Dendritic cell treated with granulocyte-macrophage colony-stimulating factor and Interleukin-4, amounts not matched to agents 40 ng/mL and 50 ng/mL, for 4 days (primary cell): ENCODE measurements at regions of chr11 and their contacts with region 1.

Region 1: GRCh38 chr11:2428322-2428795 is 16.0 kb downstream of the TRPM5 start:
- H3K4me3 Mint-ChIP-seq: no peak overlapping the region
- H3K27ac Mint-ChIP-seq: no peak overlapping the region
- H3K4me1 Mint-ChIP-seq: no peaks in the 10 kb centered on the region
- H3K27me3 Mint-ChIP-seq: peaks cover 25% of the 10 kb centered on the region

Region 2: DNA sequence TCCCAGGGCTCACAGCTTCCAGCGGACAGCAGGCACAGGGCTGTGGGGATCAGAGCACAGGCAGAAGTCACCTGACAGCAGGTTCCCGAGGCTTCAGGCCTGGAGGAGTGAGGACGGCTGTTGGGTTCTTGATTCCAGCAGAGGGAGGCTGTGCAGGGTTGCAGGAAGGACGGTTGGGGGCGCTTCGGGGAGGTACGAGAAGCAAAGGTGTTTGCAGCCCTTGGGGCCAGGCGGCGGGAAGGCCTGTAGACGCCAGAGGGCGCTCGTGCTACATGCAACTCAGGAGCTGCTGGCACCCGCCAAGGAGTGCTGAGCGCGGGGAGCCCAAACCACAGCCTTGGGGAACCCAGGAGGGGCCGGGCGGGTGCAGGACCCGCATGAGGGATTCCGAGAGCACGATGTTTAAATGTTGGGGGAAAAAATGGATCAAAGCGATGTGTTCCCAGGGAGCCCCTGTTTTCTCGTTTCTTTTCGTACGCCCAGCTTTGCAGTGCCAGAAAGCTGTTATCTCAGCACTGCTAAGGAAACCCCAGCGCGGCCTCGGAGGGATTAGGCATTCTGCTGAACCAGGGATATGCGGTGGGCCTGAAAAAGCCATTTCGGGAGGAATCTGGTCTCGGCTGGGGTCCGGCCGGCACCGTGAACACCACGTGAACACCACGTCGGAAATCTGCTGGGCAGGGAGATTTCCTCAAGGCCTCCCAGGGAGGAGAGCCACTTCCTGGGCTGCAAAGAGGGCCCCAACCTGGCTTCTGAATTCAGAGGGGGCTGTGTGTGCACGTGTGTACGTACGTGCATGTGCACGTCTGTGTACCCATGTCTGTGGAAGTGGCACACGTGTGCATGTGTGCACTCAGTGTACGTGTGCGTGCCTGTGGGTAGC is 104.6 kb after region 1 on chr11:
- intact Hi-C with region 1: loop called (anchors 1 kb)
- H3K4me3 Mint-ChIP-seq: peak overlapping the region; percentile 70
- H3K27ac Mint-ChIP-seq: peak overlapping the region; percentile 56
- H3K4me1 Mint-ChIP-seq: peaks cover 64% of the 10 kb centered on the region
- H3K27me3 Mint-ChIP-seq: peaks cover 18% of the 10 kb centered on the region